HepG2 (cell line): ENCODE measurements at regions of chr9 and their contacts with region 1.

Region 1: DNA sequence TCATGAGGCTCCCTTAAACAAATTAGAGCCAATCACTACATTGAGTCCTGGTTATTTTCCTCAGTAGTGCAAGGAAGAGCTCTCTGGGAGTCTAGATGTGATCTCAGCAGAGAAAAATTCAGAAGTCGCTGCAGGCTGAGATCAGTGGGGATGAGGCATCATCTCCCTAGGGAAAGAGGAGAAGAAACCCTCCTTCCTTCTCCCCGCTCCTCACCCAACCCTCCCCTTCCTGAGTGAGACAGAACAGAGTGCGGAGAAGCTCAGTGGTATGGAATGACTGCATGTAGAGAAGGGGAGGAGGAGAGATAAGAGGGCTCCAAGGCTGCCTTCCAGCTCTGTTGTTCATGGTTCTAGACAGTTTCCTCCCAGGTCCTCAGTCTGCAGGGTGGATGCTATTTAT is 80.5 kb downstream of the PAPPA start:
- DNase-seq: no peak
- ATAC-seq: no peak
- H3K4me3 ChIP-seq: no peak overlapping the region
- H3K27ac ChIP-seq: no peak overlapping the region
- H3K4me1 ChIP-seq: no peaks in the 10 kb centered on the region
- H3K27me3 ChIP-seq: peaks cover 0 to 5% of the 10 kb centered on the region in 2 experiments; a peak in 1 of 5 replicates
- CTCF ChIP-seq: no peak
- EP300 ChIP-seq: no peak
- POLR2A ChIP-seq: no peak
- RAD21 ChIP-seq: no peak

Region 2: GRCh38 chr9:114405294-114406034 is 1828.6 kb before region 1 on chr9:
- CTCF ChIA-PET with region 1: no interaction called
- POLR2A ChIA-PET with region 1: no interaction called
- in situ Hi-C with region 1: no loop called
- intact Hi-C with region 1: loop called (anchors 10 kb)
- DNase-seq: peak; percentile 72
- ATAC-seq: peak; percentile 88
- H3K4me3 ChIP-seq: no peak overlapping the region
- H3K27ac ChIP-seq: no peak overlapping the region
- H3K4me1 ChIP-seq: peaks cover 29% of the 10 kb centered on the region
- H3K27me3 ChIP-seq: no peaks in the 10 kb centered on the region
- CTCF ChIP-seq: peak; percentile 95
- EP300 ChIP-seq: no peak
- POLR2A ChIP-seq: no peak
- RAD21 ChIP-seq: peak; percentile 94

Region 3: GRCh38 chr9:116101516-116101915 is 132.6 kb before region 1 on chr9:
- CTCF ChIA-PET with region 1: no interaction called
- POLR2A ChIA-PET with region 1: no interaction called
- in situ Hi-C with region 1: no loop called
- intact Hi-C with region 1: no loop called
- DNase-seq: no peak
- ATAC-seq: no peak
- H3K4me3 ChIP-seq: no peak overlapping the region
- H3K27ac ChIP-seq: no peak overlapping the region
- H3K4me1 ChIP-seq: no peaks in the 10 kb centered on the region
- H3K27me3 ChIP-seq: no peaks in the 10 kb centered on the region
- CTCF ChIP-seq: no peak
- EP300 ChIP-seq: no peak
- POLR2A ChIP-seq: no peak
- RAD21 ChIP-seq: no peak

Region 4: DNA sequence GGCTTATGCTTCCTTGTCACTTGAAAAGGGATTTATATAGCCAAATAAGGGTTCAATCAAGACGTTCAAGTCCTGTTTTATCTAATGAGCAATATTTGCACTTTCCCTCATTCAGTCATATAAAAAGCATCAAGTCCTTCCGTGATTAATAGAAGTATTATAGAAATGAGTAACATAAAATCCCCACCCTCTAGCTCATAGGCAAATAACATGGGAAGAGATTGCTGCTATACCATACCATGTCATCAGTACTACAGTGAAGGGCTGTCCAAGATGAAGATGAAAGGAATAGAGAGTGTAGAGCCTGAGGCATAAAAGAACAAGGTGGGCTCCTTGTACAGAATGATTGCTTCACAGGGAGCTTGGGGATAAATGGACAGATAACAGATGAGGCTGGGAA is 100.9 kb before region 1 on chr9:
- CTCF ChIA-PET with region 1: no interaction called
- POLR2A ChIA-PET with region 1: no interaction called
- in situ Hi-C with region 1: no loop called
- intact Hi-C with region 1: no loop called
- DNase-seq: no peak
- ATAC-seq: no peak
- H3K4me3 ChIP-seq: no peak overlapping the region
- H3K27ac ChIP-seq: no peak overlapping the region
- H3K4me1 ChIP-seq: no peaks in the 10 kb centered on the region
- H3K27me3 ChIP-seq: no peaks in the 10 kb centered on the region
- CTCF ChIP-seq: no peak
- EP300 ChIP-seq: no peak
- POLR2A ChIP-seq: no peak
- RAD21 ChIP-seq: no peak